ENCODE measurements at regions of chr10 and their contacts with region 1.

Region 1: DNA sequence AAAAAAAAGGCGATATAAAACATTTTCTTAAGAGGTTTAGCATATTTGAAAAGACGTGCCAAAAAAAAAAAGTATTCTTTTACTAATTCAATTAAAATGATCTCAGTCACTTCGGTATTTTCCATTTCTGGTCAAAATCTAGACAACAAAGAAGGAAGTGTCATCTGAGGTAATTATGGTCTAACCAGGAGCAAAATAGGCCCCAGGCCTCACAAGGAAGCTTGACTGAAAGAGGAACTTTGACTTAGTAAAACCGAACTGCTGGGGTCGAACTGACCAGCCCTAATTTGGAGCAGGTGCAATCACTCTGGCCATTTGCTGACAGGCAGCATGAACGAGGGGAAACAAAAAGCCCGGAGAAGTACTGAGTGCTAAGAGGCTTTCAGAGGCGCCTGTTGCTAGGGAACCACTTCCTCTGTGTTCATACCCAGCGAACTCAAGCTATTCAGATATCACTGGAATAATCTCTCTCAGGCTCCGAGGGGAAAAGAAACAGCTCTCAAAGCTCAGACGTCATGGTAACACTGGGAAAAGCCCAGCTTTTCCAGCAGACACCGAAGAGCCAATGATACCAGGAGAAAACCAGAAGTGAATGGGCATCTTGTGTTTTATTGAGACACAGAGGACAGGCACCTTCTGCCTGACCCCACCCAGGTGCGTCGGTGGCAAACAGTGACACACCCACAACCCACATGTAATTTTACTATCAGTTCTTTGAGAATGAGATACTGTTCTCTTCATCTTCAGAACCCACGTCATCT is 126.5 kb downstream of the FAM107B start:
- DNase-seq: peak; percentile 87 to 95 (median 89)
- H3K4me3 ChIP-seq: peak overlapping the region in 1 of 2 donors; percentile 51
- H3K4me3 Mint-ChIP-seq: peak overlapping the region; percentile 85 to 91 (median 88)
- H3K27ac ChIP-seq: peak overlapping the region; percentile 96
- H3K27ac Mint-ChIP-seq: peak overlapping the region; percentile 98 to 100 (median 100)
- H3K4me1 ChIP-seq: peaks cover 54% of the 10 kb centered on the region
- H3K4me1 Mint-ChIP-seq: peaks cover 49 to 80% (median 57%) of the 10 kb centered on the region in 4 donors
- H3K27me3 ChIP-seq: no peaks in the 10 kb centered on the region
- H3K27me3 Mint-ChIP-seq: no peaks in the 10 kb centered on the region

Region 2: DNA sequence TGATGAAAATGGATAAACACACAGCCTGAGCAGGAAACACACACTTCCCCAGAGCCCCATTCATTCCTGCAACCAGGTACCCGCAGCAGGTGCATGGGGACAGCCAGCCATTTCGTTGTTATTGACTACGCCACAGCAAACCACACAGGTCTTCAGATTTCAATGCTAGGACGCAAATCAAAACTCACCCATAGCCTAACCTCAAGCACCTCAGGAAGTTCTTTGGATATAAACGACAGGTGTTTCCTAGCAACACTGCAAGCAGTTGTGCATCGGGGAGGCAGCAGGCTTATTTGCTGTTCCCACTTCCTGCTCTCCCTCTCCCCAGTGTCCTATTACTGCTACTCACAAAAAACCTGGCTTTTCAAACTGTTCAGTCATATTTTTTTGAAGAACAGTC is 141.0 kb before region 1 on chr10:
- CTCF ChIA-PET with region 1: no interaction called
- POLR2A ChIA-PET with region 1: interaction called, 3 read pairs
- intact Hi-C with region 1: loop called (anchors 1 kb)
- DNase-seq: peak; percentile 80 to 89 (median 85)
- H3K4me3 ChIP-seq: no peak overlapping the region
- H3K4me3 Mint-ChIP-seq: peak overlapping the region; percentile 26 to 75 (median 67)
- H3K27ac ChIP-seq: peak overlapping the region; percentile 56
- H3K27ac Mint-ChIP-seq: peak overlapping the region; percentile 89 to 99 (median 96)
- H3K4me1 ChIP-seq: peaks cover 39% of the 10 kb centered on the region
- H3K4me1 Mint-ChIP-seq: peaks cover 37 to 40% (median 38%) of the 10 kb centered on the region in 4 donors
- H3K27me3 ChIP-seq: no peaks in the 10 kb centered on the region
- H3K27me3 Mint-ChIP-seq: no peaks in the 10 kb centered on the region

Region 3: GRCh38 chr10:14564268-14564744 is 83.9 kb before region 1 on chr10:
- CTCF ChIA-PET with region 1: interaction called, 3 read pairs
- POLR2A ChIA-PET with region 1: interaction called, 26 read pairs
- intact Hi-C with region 1: loop called (anchors 2 kb)
- DNase-seq: peak; percentile 69 to 82 (median 78)
- H3K4me3 ChIP-seq: peak overlapping the region in 1 of 2 donors; percentile 8
- H3K4me3 Mint-ChIP-seq: peak overlapping the region; percentile 71 to 91 (median 85)
- H3K27ac ChIP-seq: peak overlapping the region; percentile 79
- H3K27ac Mint-ChIP-seq: peak overlapping the region; percentile 90 to 97 (median 96)
- H3K4me1 ChIP-seq: peaks cover 96% of the 10 kb centered on the region
- H3K4me1 Mint-ChIP-seq: peaks cover 71 to 99% (median 85%) of the 10 kb centered on the region in 4 donors
- H3K27me3 ChIP-seq: no peaks in the 10 kb centered on the region
- H3K27me3 Mint-ChIP-seq: no peaks in the 10 kb centered on the region

Region 4: GRCh38 chr10:14588084-14588937 is 59.9 kb before region 1 on chr10:
- CTCF ChIA-PET with region 1: no interaction called
- POLR2A ChIA-PET with region 1: interaction called, 12 read pairs
- intact Hi-C with region 1: loop called (anchors 1 kb)
- DNase-seq: peak; percentile 44 to 81 (median 52)
- H3K4me3 ChIP-seq: peak overlapping the region in 1 of 2 donors; percentile 37
- H3K4me3 Mint-ChIP-seq: peak overlapping the region; percentile 76 to 90 (median 86)
- H3K27ac ChIP-seq: peak overlapping the region; percentile 86
- H3K27ac Mint-ChIP-seq: peak overlapping the region; percentile 96 to 100 (median 98)
- H3K4me1 ChIP-seq: peaks cover 95% of the 10 kb centered on the region
- H3K4me1 Mint-ChIP-seq: peaks cover 82 to 96% (median 87%) of the 10 kb centered on the region in 4 donors
- H3K27me3 ChIP-seq: no peaks in the 10 kb centered on the region
- H3K27me3 Mint-ChIP-seq: no peaks in the 10 kb centered on the region

Region 5: GRCh38 chr10:14659626-14660196 is 11.5 kb after region 1 on chr10:
- CTCF ChIA-PET with region 1: interaction called, 3 read pairs
- POLR2A ChIA-PET with region 1: interaction called, 15 read pairs
- intact Hi-C with region 1: loop called (anchors 1 kb)
- DNase-seq: peak; percentile 17 to 79 (median 22)
- H3K4me3 ChIP-seq: peak overlapping the region in 1 of 2 donors; percentile 12
- H3K4me3 Mint-ChIP-seq: peak overlapping the region; percentile 68 to 88 (median 74)
- H3K27ac ChIP-seq: peak overlapping the region; percentile 48
- H3K27ac Mint-ChIP-seq: peak overlapping the region; percentile 78 to 97 (median 92)
- H3K4me1 ChIP-seq: peaks cover 65% of the 10 kb centered on the region
- H3K4me1 Mint-ChIP-seq: peaks cover 48 to 72% (median 60%) of the 10 kb centered on the region in 4 donors
- H3K27me3 ChIP-seq: no peaks in the 10 kb centered on the region
- H3K27me3 Mint-ChIP-seq: no peaks in the 10 kb centered on the region

Region 6: DNA sequence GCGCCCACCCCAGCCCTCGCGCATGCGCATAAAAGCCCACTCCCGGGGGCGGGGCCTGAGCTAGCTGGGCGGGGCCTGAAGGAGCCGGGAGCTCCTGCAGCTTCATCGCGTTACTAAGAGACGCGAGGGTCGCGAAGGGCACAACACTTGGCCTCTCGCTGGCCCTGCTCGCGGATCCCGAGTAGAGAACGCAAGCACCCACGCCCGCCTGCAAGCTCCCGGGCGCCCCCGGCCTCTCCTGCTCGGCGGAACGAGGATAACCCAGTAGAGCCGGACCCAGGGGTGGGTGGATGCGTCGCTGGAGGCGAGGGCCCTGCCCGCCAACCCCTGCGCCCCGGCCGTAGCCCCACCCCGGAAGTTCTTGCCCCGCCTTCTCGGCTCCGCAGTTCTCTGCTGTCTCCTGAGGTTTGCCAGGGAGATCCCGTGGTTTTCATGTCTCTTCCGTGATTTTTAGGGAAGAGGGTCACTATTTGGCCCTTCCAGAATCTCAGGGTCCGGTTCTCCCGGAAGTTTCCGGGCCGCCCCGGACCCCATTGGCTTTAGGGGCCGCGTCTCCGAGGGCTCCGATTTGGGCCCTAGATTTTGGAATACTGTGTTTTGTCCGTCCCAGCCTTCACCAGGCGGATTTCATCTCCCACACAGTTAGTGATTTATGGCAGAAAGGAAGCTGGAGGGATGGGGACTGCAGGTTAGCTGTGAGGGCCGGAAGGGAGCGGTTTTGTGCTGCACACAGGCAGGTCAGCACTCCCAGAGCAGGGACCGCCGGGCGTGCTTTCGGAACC is 311.3 kb after region 1 on chr10 and contains the start of gene MEIG1:
- CTCF ChIA-PET with region 1: no interaction called
- POLR2A ChIA-PET with region 1: no interaction called
- intact Hi-C with region 1: loop called (anchors 10 kb)
- DNase-seq: peak; percentile 87 to 92 (median 88)
- H3K4me3 ChIP-seq: peak within 1 kb of the TSS; percentile 79 to 98
- H3K4me3 Mint-ChIP-seq: peak within 1 kb of the TSS; percentile 93 to 99 (median 96)
- H3K27ac ChIP-seq: peak within 1 kb of the TSS; percentile 92
- H3K27ac Mint-ChIP-seq: peak within 1 kb of the TSS; percentile 93 to 99 (median 96)
- H3K4me1 ChIP-seq: peaks cover 14% of the 10 kb centered on the region
- H3K4me1 Mint-ChIP-seq: peaks cover 20 to 40% (median 29%) of the 10 kb centered on the region in 4 donors
- H3K27me3 ChIP-seq: no peaks in the 10 kb centered on the region
- H3K27me3 Mint-ChIP-seq: no peaks in the 10 kb centered on the region
- total RNA-seq, gene MEIG1: not detected

Region 7: DNA sequence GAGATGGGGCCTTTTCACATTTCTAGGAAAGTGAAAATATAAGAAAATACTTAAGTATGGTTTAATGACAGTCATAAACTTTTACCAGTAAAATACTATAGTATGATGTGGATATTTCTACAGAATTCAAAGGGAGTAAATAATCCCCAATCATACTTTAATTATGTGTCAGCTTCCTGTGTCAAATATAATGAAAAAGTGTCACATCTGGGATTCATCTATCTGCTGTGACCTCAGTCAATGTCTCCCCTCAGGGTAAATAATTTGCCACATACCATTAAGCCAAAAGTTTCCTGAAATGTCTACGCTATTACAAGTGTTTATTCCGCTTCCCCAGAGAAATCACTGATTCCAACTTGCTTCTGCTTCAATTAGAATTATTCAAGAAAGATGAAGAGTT is 961.1 kb after region 1 on chr10:
- CTCF ChIA-PET with region 1: no interaction called
- POLR2A ChIA-PET with region 1: no interaction called
- intact Hi-C with region 1: no loop called
- DNase-seq: no peak
- H3K4me3 ChIP-seq: no peak overlapping the region
- H3K4me3 Mint-ChIP-seq: no peak overlapping the region
- H3K27ac ChIP-seq: no peak overlapping the region
- H3K27ac Mint-ChIP-seq: no peak overlapping the region
- H3K4me1 ChIP-seq: no peaks in the 10 kb centered on the region
- H3K4me1 Mint-ChIP-seq: no peaks in the 10 kb centered on the region
- H3K27me3 ChIP-seq: no peaks in the 10 kb centered on the region
- H3K27me3 Mint-ChIP-seq: peaks cover 3 to 8% of the 10 kb centered on the region in 2 donors